Activated CD4-positive, alpha-beta T cell treated with anti-CD3 and anti-CD28 coated beads for 36 hours (primary cell): ENCODE measurements at regions of chr11 and their contacts with region 1.

Region 1: DNA sequence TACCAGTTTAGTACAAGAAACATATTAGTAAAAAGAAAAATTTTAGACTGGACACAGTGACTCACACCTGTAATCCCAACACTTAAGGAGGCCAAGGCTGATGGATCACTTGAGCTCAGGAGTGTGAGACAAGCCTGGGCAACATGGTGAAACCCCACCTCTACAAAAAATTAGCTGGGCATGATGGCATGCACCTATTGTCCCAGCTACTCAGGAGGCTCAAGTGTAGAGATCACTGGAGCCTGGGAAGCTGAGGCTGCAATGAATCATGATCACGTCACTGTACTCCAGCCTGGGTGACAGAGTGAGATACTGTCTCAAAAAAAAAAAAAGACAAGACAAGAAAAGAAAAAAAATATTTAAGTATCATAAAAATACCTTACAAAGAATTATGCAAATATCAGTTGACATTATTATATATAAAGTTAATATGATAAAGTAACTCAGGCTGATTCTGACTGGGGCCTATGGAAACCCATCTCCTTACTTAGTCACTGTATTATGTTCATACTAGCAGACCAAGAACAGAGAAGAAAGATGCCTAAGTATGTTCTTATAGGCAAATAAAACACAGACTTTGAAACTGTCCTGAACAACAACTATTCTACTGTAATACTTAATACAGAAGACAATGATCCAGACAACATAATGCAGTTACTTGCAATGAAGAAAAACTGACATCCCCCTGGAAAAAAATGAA is 27.3 kb downstream of the FAM168A start:
- DNase-seq: no peak
- ATAC-seq: no peak
- H3K4me3 Mint-ChIP-seq: no peak overlapping the region
- H3K27ac Mint-ChIP-seq: no peak overlapping the region
- H3K4me1 Mint-ChIP-seq: no peaks in the 10 kb centered on the region
- H3K27me3 Mint-ChIP-seq: no peaks in the 10 kb centered on the region

Region 2: GRCh38 chr11:73530109-73530508 is 40.5 kb before region 1 on chr11:
- CTCF ChIA-PET with region 1: interaction called, 3 read pairs
- POLR2A ChIA-PET with region 1: no interaction called
- intact Hi-C with region 1: loop called in 1 of 2 experiments (anchors 2 kb)
- DNase-seq: peak; percentile 11
- ATAC-seq: no peak
- H3K4me3 Mint-ChIP-seq: no peak overlapping the region
- H3K27ac Mint-ChIP-seq: no peak overlapping the region
- H3K4me1 Mint-ChIP-seq: peaks cover 45% of the 10 kb centered on the region
- H3K27me3 Mint-ChIP-seq: no peaks in the 10 kb centered on the region